Activated CD8-positive, alpha-beta memory T cell treated with anti-CD3 and anti-CD28 coated beads, Interleukin-2, amount 10 ng/mL, durations not matched to agents 7 days and 5 days (primary cell): ENCODE measurements at regions of chr17 and their contacts with region 1.

Region 1: DNA sequence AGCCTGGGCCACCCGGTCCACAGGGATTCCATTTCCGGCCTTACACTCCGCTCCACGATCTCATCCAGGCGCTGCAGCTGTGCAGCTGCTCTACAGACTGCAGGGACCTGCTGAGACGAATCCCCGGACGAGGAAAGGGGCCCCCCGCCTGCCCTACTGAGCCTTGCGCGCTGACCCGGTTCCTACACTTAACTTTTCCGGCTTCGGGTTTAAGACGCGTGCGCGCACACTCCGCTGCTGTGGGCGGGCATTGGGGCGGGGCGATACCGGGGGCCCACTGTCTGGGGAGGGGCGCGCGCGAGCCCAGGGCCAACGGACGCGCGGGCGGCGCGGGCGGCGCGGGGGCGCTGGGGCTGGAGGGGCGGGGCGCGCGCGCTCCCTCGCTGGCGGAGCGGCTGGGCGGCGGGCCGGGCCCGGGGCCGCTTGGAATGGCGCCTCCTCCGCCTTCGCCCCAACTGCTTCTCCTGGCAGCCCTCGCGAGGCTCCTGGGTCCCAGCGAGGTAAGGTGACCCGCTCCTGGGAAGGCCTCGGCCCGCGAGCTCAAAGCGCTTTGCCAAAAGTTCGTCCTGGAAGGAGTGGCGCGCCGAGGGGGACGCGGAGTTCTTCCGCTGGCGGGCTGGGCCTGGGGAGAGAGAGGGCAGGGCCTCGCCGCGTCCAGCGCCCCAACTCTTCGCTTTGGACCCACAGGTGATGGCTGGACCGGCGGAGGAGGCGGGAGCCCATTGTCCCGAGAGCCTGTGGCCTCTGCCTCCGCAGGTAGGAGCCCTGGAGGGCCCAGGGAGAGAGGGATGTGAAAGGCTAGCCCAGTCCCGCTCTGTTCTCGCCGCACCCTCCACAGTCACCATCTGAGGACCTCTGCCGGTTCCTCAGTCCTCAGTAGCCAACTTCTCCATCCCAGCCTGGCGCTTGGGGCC is at the start of gene TP53I13:
- DNase-seq: peak; percentile 92
- ATAC-seq: peak; percentile 61
- H3K4me3 Mint-ChIP-seq: peak within 1 kb of the TSS; percentile 95
- H3K27ac Mint-ChIP-seq: peak within 1 kb of the TSS; percentile 91
- H3K4me1 Mint-ChIP-seq: peaks cover 29% of the 10 kb centered on the region
- H3K27me3 Mint-ChIP-seq: no peaks in the 10 kb centered on the region
- total RNA-seq, gene TP53I13: 97.0 to 131 TPM

Region 2: GRCh38 chr17:29579866-29580771 is 11.5 kb after region 1 on chr17:
- CTCF ChIA-PET with region 1: interaction called, 94 read pairs
- DNase-seq: peak; percentile 94
- ATAC-seq: peak; percentile 97
- H3K4me3 Mint-ChIP-seq: no peak overlapping the region
- H3K27ac Mint-ChIP-seq: peak overlapping the region; percentile 55
- H3K4me1 Mint-ChIP-seq: peaks cover 25% of the 10 kb centered on the region
- H3K27me3 Mint-ChIP-seq: no peaks in the 10 kb centered on the region

Region 3: GRCh38 chr17:29589524-29590410 is 21.2 kb after region 1 on chr17 and contains the start of gene GIT1:
- CTCF ChIA-PET with region 1: interaction called, 94 read pairs
- DNase-seq: peak; percentile 87
- ATAC-seq: peak; percentile 75
- H3K4me3 Mint-ChIP-seq: peak within 1 kb of the TSS; percentile 87
- H3K27ac Mint-ChIP-seq: peak within 1 kb of the TSS; percentile 88
- H3K4me1 Mint-ChIP-seq: peaks cover 75% of the 10 kb centered on the region
- H3K27me3 Mint-ChIP-seq: no peaks in the 10 kb centered on the region
- total RNA-seq, gene GIT1: 69.5 to 79.5 TPM

Region 4: DNA sequence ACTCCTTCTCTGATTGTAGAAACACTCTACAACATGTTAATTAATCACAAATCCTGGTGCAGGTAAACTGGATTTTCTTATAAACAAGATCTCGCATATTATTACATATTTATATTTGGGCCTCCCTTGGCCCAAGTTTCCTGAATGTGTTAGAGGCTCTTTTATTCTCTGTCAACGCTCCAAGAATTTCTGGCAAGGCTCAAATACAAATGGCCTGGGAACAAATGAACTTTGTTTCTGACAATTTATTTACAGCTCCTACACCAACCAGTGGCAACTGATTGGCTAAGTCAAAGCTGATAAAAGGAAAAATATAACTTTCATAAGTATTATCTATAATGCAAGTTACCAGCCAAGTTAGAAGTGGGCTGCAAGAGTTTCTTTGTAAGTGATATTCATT is 119.0 kb after region 1 on chr17:
- CTCF ChIA-PET with region 1: no interaction called
- DNase-seq: no peak
- ATAC-seq: no peak
- H3K4me3 Mint-ChIP-seq: no peak overlapping the region
- H3K27ac Mint-ChIP-seq: no peak overlapping the region
- H3K4me1 Mint-ChIP-seq: peaks cover 13% of the 10 kb centered on the region
- H3K27me3 Mint-ChIP-seq: no peaks in the 10 kb centered on the region